Endothelial cell of umbilical vein (primary cell): ENCODE measurements at regions of chr4 and their contacts with region 1.

Region 1: GRCh38 chr4:140049024-140049848 is 104.7 kb downstream of the MAML3 start:
- DNase-seq: peak; percentile 85
- H3K4me3 ChIP-seq: peak overlapping the region; percentile 0 to 24 (median 5)
- H3K27ac ChIP-seq: peak overlapping the region; percentile 80
- H3K4me1 ChIP-seq: peaks cover 49% of the 10 kb centered on the region
- H3K27me3 ChIP-seq: no peaks in the 10 kb centered on the region
- CTCF ChIP-seq: no peak
- POLR2A ChIP-seq: no peak

Region 2: GRCh38 chr4:139890816-139891215 is 158.4 kb before region 1 on chr4:
- CTCF ChIA-PET with region 1: interaction called, 3 read pairs
- POLR2A ChIA-PET with region 1: no interaction called
- dilution Hi-C with region 1: no loop called
- intact Hi-C with region 1: loop called (anchors 5 kb)
- DNase-seq: peak; percentile 81
- H3K4me3 ChIP-seq: no peak overlapping the region
- H3K27ac ChIP-seq: peak overlapping the region; percentile 51
- H3K4me1 ChIP-seq: peaks cover 24% of the 10 kb centered on the region
- H3K27me3 ChIP-seq: no peaks in the 10 kb centered on the region
- CTCF ChIP-seq: peak; percentile 21 to 22
- POLR2A ChIP-seq: no peak

Region 3: DNA sequence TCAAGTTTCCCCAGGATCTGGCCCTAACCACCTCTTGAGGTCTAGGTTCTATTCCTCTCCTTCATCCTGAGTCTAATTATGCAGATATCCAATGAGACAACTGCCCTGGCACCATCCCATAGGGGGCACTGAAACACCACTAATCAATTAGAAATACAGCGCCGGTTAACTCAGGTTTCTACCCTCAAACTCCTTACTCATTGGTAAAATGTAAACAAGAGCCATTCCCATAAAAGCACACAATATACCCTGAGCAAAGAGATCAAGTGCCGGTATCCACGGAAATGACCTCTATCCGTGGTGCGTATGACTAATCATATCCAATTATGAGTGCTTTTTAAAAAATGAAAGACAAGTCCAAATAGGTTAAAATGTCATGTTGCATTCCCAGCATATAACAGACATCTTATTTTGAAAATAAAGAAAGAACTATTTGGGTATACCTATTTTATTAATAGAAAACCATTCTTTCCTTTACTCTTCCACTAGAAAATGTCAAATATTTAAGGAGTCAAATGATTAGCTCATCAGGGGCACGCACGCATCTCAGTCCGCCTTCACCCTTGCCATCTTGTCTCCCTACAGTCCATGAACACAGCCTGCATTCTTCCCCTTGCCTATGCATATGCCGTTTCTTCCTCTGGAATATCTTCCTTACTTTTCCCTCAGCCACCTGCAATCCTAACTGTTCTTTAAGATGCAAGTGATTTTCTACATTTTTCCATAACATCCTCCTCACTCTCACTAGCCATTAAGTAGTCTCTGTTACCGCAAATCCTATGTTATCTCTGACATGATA is 36.3 kb before region 1 on chr4:
- CTCF ChIA-PET with region 1: interaction called, 9 read pairs
- POLR2A ChIA-PET with region 1: no interaction called
- dilution Hi-C with region 1: no loop called
- intact Hi-C with region 1: loop called (anchors 1 kb)
- DNase-seq: peak; percentile 92
- H3K4me3 ChIP-seq: no peak overlapping the region
- H3K27ac ChIP-seq: peak overlapping the region; percentile 49
- H3K4me1 ChIP-seq: peaks cover 17% of the 10 kb centered on the region
- H3K27me3 ChIP-seq: no peaks in the 10 kb centered on the region
- CTCF ChIP-seq: peak; percentile 62 to 74
- POLR2A ChIP-seq: no peak

Region 4: GRCh38 chr4:140090215-140090731 is 41.0 kb after region 1 on chr4:
- CTCF ChIA-PET with region 1: interaction called, 31 read pairs
- POLR2A ChIA-PET with region 1: interaction called, 6 read pairs
- dilution Hi-C with region 1: no loop called
- intact Hi-C with region 1: loop called (anchors 1 kb)
- DNase-seq: peak; percentile 73
- H3K4me3 ChIP-seq: no peak overlapping the region
- H3K27ac ChIP-seq: peak overlapping the region; percentile 89
- H3K4me1 ChIP-seq: peaks cover 63% of the 10 kb centered on the region
- H3K27me3 ChIP-seq: no peaks in the 10 kb centered on the region
- CTCF ChIP-seq: no peak
- POLR2A ChIP-seq: peak; percentile 58